ENCODE measurements at regions of chr10 and their contacts with region 1.

Region 1: DNA sequence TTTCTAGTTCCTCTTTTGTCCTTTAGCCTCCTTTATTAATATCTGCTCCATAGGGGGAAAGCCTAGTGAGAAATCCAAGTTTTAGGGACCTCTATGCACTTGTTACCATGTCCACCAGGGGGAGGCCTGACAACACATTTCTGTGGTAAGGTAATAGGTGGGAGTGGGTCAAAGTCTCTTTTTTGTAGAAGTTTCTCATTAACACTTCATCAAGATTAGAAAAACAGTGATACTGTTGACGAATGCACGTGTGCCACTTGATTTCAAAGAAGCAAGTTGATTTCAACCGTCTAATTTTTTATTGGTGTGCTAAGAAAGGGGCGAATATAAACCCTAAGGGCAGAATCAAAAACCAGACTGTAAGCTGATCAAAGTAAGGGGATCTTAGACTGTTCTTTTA is 30.6 kb downstream of the CISD1 start:
- DNase-seq: no peak
- H3K4me3 ChIP-seq: no peak overlapping the region
- H3K27ac ChIP-seq: no peak overlapping the region
- H3K27me3 ChIP-seq: no peaks in the 10 kb centered on the region
- CTCF ChIP-seq: peak; percentile 94

Region 2: GRCh38 chr10:58189269-58189668 is 110.3 kb before region 1 on chr10:
- CTCF ChIA-PET with region 1: interaction called, 10 read pairs
- POLR2A ChIA-PET with region 1: no interaction called
- DNase-seq: peak; percentile 37
- H3K4me3 ChIP-seq: no peak overlapping the region
- H3K27ac ChIP-seq: no peak overlapping the region
- H3K27me3 ChIP-seq: no peaks in the 10 kb centered on the region
- CTCF ChIP-seq: no peak

Region 3: DNA sequence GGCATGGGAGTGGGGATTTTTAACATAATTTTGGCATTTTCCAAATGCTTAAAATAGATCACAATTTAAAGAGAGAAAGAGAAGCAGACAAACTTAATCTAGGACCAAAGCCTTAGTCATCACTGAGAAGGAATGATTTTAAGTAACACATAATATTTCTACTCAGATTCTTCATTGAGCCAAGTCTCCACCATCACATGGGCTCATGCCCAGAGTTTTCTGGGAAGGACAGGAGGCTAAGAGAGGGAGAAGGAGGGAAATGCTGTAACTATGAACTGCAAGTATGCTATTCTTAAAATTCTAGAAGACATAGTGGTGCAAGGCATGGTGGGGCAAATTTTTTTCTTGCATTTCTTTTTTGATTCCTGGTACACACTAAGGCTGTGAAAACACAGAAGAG is 11.4 kb after region 1 on chr10:
- CTCF ChIA-PET with region 1: interaction called, 46 read pairs
- POLR2A ChIA-PET with region 1: no interaction called
- DNase-seq: no peak
- H3K4me3 ChIP-seq: no peak overlapping the region
- H3K27ac ChIP-seq: no peak overlapping the region
- H3K27me3 ChIP-seq: peaks cover 2% of the 10 kb centered on the region
- CTCF ChIP-seq: no peak

Region 4: DNA sequence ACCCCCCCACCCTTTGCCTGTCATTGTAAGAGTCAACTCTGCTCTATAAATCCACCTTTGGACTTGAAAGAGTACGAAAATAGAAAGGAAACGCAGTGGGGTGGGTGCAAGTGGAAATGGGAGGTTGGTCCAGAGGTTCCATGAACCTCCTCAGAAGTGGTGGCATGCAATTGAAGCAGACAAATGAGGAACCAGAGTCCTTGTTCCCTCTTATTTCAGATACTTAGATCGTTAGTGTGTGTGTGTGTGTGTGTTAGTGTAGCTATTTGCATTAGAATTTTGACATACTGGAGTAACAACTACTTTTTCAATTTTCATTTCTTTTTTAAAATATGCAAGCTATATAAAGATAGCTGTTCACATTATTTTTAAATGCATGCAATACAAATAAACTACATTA is 67.5 kb after region 1 on chr10:
- CTCF ChIA-PET with region 1: interaction called, 17 read pairs
- POLR2A ChIA-PET with region 1: interaction called, 3 read pairs
- DNase-seq: no peak
- H3K4me3 ChIP-seq: no peak overlapping the region
- H3K27ac ChIP-seq: no peak overlapping the region
- H3K27me3 ChIP-seq: no peaks in the 10 kb centered on the region
- CTCF ChIP-seq: no peak

Region 5: DNA sequence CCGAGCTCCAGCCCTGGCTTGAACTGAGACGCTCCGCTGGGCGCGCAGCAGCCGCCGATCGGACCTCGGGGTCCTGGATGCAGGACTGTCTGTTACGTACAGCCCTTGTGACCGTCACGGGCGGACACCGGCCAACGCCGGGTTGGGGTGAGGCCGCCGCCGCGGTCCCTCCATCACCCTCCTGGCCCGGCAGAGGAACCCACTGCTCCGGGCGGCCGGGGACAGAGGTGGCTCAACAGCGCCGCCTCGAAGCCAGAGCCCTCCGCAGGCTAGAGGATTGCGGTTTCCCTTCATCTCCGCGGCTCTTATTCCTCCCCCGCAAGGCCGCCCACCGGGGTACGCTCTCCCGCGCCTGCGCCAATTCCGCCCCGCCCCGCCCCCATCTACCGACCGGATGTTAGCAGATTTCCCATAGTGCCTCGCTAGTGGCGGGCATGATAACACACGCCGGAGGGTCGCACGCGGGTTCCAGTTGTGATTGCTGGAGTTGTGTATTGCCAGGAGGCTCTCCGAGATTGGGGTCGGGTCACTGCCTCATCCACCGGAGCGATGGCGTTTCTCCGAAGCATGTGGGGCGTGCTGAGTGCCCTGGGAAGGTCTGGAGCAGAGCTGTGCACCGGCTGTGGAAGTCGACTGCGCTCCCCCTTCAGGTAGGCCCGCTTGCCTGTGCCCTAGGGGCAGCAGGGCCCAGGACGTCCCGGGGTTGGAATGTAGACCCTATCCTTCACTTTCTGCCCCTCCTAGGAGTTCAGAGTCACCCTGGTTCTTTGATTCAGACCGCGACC is 85.6 kb after region 1 on chr10 and contains the start of gene TFAM:
- CTCF ChIA-PET with region 1: interaction called, 98 read pairs
- POLR2A ChIA-PET with region 1: no interaction called
- DNase-seq: peak; percentile 88
- H3K4me3 ChIP-seq: peak within 1 kb of the TSS; percentile 93
- H3K27ac ChIP-seq: peak within 1 kb of the TSS; percentile 74
- H3K27me3 ChIP-seq: no peaks in the 10 kb centered on the region
- CTCF ChIP-seq: peak; percentile 70
- polyA plus RNA-seq, gene TFAM: 14.1 and 17.0 TPM in 2 replicates